Kidney (tissue), 22 donors: ENCODE measurements at regions of chr3 and their contacts with region 1.

Region 1: GRCh38 chr3:33787328-33788009 is 11.0 kb upstream of the PDCD6IP start:
- DNase-seq: peak in 4 of 5 donors; percentile 63 to 83 (median 72)
- H3K4me3 ChIP-seq: peak overlapping the region in 2 of 3 donors; percentile 13 to 28
- H3K27ac ChIP-seq: no peak overlapping the region
- H3K4me1 ChIP-seq: no peaks in the 10 kb centered on the region
- H3K27me3 ChIP-seq: no peaks in the 10 kb centered on the region
- CTCF ChIP-seq: peak; percentile 73

Region 2: GRCh38 chr3:33513262-33513863 is 274.1 kb before region 1 on chr3:
- intact Hi-C with region 1: no loop called
- DNase-seq: no peak
- H3K4me3 ChIP-seq: no peak overlapping the region
- H3K27ac ChIP-seq: no peak overlapping the region
- H3K4me1 ChIP-seq: no peaks in the 10 kb centered on the region
- H3K27me3 ChIP-seq: no peaks in the 10 kb centered on the region
- CTCF ChIP-seq: no peak

Region 3: GRCh38 chr3:33636125-33636850 is 151.2 kb before region 1 on chr3:
- intact Hi-C with region 1: loop called (anchors 10 kb)
- DNase-seq: peak in 2 of 5 donors; percentile 65 to 76
- H3K4me3 ChIP-seq: no peak overlapping the region
- H3K27ac ChIP-seq: no peak overlapping the region
- H3K4me1 ChIP-seq: no peaks in the 10 kb centered on the region
- H3K27me3 ChIP-seq: no peaks in the 10 kb centered on the region
- CTCF ChIP-seq: peak; percentile 45

Region 4: DNA sequence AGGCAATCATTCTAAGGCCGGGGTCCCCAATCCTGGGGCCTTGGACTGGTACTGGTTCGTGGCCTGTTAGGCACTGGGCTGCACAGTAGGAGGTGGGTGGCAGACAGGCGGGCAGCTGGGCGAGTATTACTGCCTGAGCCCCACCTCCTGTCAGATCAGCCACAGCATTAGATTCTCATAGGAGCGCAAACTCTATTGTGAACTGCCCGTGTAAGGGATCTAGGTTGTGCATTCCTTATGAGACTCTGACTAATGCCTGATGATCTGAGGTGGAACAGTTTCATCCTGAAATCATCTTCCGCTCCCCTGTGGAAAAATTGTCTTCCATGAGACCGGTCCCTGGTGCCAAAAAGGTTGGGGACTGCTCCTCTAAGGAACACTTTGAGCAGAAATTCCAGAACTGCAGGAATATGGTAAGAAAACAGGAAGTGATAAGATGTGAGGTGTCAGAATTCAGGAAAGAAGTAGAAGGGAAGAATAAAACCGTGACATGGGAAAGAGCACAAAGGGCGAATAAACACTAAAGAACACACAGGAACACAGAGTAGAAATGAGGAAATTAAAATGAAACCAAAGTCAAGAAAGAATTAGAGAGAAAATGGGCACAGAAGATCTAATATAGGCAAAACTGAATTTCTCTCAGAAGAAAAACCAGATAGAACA is 68.5 kb after region 1 on chr3:
- intact Hi-C with region 1: no loop called
- DNase-seq: no peak
- H3K4me3 ChIP-seq: no peak overlapping the region
- H3K27ac ChIP-seq: no peak overlapping the region
- H3K4me1 ChIP-seq: no peaks in the 10 kb centered on the region
- H3K27me3 ChIP-seq: no peaks in the 10 kb centered on the region
- CTCF ChIP-seq: no peak

Region 5: DNA sequence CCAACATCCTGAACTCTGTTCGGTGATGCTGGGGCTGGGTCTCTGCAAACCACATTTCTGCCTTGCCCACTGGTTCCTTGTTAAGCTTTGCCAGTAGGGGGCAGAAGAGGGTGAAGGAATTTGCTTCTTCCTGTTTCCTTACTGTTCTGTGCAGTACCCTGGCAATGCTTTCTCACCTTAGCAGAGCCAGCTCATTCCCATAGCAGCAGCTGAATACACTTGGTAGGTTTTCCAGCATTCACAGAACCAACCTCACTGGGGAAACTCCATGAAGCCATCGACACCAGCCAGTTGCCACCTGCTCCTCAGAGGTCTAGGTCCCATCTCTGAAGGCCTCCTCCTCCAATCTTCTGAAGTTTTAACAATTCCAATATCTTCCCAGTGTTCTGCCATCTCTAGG is 319.4 kb after region 1 on chr3:
- intact Hi-C with region 1: no loop called
- DNase-seq: peak in 4 of 5 donors; percentile 64 to 80 (median 68)
- H3K4me3 ChIP-seq: no peak overlapping the region
- H3K27ac ChIP-seq: no peak overlapping the region
- H3K4me1 ChIP-seq: no peaks in the 10 kb centered on the region
- H3K27me3 ChIP-seq: no peaks in the 10 kb centered on the region
- CTCF ChIP-seq: peak; percentile 49

Region 6: GRCh38 chr3:34150992-34151391 is 363.5 kb after region 1 on chr3:
- intact Hi-C with region 1: no loop called
- DNase-seq: peak in 1 of 5 donors; percentile 36
- H3K4me3 ChIP-seq: no peak overlapping the region
- H3K27ac ChIP-seq: no peak overlapping the region
- H3K4me1 ChIP-seq: no peaks in the 10 kb centered on the region
- H3K27me3 ChIP-seq: no peaks in the 10 kb centered on the region
- CTCF ChIP-seq: no peak